Vagina (tissue), 2 donors: ENCODE measurements at regions of chr19 and their contacts with region 1.

Region 1: GRCh38 chr19:34722353-34722752 is 11.7 kb upstream of the ZNF181 start:
- DNase-seq: no peak
- H3K4me3 ChIP-seq: no peak overlapping the region
- H3K27ac ChIP-seq: no peak overlapping the region
- H3K4me1 ChIP-seq: no peaks in the 10 kb centered on the region
- H3K27me3 ChIP-seq: no peaks in the 10 kb centered on the region
- CTCF ChIP-seq: no peak
- POLR2A ChIP-seq: no peak

Region 2: GRCh38 chr19:34677386-34678084 is 44.8 kb before region 1 on chr19 and contains the start of gene ZNF302:
- intact Hi-C with region 1: no loop called
- DNase-seq: peak in 1 of 2 donors; percentile 98
- H3K4me3 ChIP-seq: peak within 1 kb of the TSS; percentile 75 to 85
- H3K27ac ChIP-seq: peak within 1 kb of the TSS; percentile 93
- H3K4me1 ChIP-seq: peaks cover 29% of the 10 kb centered on the region
- H3K27me3 ChIP-seq: no peaks in the 10 kb centered on the region
- CTCF ChIP-seq: peak in 1 of 3 experiments; percentile 8
- POLR2A ChIP-seq: peak in 1 of 2 donors; percentile 21
- total RNA-seq, gene ZNF302: 17.2 TPM

Region 3: DNA sequence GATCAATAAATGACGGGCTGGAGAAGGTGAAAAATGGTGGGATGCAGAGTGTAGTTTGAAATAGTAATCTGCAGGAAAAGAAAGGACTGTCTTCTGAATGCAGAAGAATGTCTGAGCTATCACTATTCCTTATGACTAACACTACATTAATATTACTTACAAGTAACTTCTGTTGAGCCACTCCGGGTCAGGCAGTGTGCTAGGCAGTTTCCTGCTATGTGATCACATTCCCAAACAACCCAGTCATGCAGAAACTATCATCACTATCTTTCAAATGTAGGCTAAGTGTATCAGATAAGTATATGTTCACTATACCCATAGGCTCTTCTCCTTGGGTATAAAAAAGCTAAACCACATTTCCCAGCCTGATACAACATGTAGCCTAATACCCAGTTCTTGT is 44.0 kb after region 1 on chr19:
- intact Hi-C with region 1: no loop called
- DNase-seq: no peak
- H3K4me3 ChIP-seq: no peak overlapping the region
- H3K27ac ChIP-seq: no peak overlapping the region
- H3K4me1 ChIP-seq: no peaks in the 10 kb centered on the region
- H3K27me3 ChIP-seq: no peaks in the 10 kb centered on the region
- CTCF ChIP-seq: no peak
- POLR2A ChIP-seq: no peak

Region 4: DNA sequence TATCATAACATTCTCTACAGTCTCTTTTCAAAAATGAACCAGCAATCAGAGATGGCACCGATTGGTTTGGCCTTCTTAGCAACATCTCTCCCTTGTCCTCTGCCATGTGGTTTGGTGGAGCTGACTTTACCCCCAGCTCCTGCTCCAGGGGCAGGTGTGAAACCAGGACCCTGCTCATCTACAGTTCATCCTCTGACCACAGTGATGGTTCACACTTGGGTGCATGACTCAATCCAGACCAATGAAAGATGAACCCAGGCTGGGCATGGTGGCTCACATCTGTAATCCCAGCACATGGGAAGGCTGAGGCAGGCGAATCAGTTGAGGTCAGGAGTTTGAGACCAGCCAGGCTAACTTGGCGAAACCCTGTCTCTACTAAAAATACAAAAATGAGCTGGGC is 692.1 kb after region 1 on chr19:
- intact Hi-C with region 1: loop called (anchors 5 kb)
- DNase-seq: no peak
- H3K4me3 ChIP-seq: no peak overlapping the region
- H3K27ac ChIP-seq: no peak overlapping the region
- H3K4me1 ChIP-seq: no peaks in the 10 kb centered on the region
- H3K27me3 ChIP-seq: no peaks in the 10 kb centered on the region
- CTCF ChIP-seq: no peak
- POLR2A ChIP-seq: no peak